ENCODE measurements at regions of chr4 and their contacts with region 1.

Region 1: GRCh38 chr4:142405021-142405694 is 440.9 kb downstream of the INPP4B start:
- DNase-seq: peak; percentile 19 to 66 (median 60)
- ATAC-seq: peak; percentile 72
- H3K4me3 ChIP-seq: peak overlapping the region; percentile 95
- H3K4me3 Mint-ChIP-seq: peak overlapping the region; percentile 92 to 100 (median 99)
- H3K27ac ChIP-seq: peak overlapping the region; percentile 82
- H3K27ac Mint-ChIP-seq: peak overlapping the region; percentile 86 to 100 (median 96)
- H3K4me1 ChIP-seq: peaks cover 26 to 48% of the 10 kb centered on the region in 2 donors
- H3K4me1 Mint-ChIP-seq: peaks cover 22 to 80% (median 69%) of the 10 kb centered on the region in 7 donors
- H3K27me3 ChIP-seq: no peaks in the 10 kb centered on the region
- H3K27me3 Mint-ChIP-seq: no peaks in the 10 kb centered on the region

Region 2: DNA sequence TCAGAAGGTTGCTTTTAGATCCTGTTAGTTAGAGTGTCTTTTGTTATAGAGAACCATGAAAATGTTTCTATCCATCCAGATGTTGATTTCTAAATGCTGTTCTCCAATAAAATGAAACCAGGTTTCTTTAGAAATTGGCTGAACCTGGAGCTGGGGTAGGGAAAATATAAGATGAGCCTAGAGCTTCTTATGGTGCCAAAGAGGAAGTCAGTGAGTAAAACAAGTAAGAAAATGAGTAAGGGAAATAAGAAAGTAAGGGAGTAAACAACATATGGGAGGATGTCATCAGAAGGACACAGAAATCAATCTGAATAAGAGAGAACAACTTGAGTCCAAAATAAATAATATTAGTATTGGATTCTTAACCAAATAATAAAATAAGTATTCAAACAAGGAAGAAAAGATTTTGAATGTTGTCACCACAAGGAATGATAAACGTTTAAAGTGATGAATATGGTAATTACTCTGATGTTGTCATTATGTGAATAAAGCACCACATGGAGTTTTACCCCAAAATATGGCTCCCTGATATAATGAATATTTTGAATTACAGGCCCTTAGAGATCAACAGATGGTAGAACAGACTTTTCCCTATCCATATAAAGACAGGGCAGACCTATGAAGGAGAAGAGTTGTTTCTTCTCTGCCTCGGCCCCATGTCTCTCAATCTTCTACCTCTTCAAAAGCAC is 262.6 kb before region 1 on chr4:
- CTCF ChIA-PET with region 1: no interaction called
- POLR2A ChIA-PET with region 1: no interaction called
- intact Hi-C with region 1: no loop called
- DNase-seq: no peak
- ATAC-seq: no peak
- H3K4me3 ChIP-seq: no peak overlapping the region
- H3K4me3 Mint-ChIP-seq: peak overlapping the region in 3 of 10 donors; percentile 0 to 39 (median 8)
- H3K27ac ChIP-seq: no peak overlapping the region
- H3K27ac Mint-ChIP-seq: peak overlapping the region; percentile 28 to 85 (median 63)
- H3K4me1 ChIP-seq: no peaks in the 10 kb centered on the region
- H3K4me1 Mint-ChIP-seq: peaks cover 11 to 53% (median 43%) of the 10 kb centered on the region in 7 donors
- H3K27me3 ChIP-seq: no peaks in the 10 kb centered on the region
- H3K27me3 Mint-ChIP-seq: no peaks in the 10 kb centered on the region

Region 3: GRCh38 chr4:142353149-142353738 is 51.9 kb before region 1 on chr4:
- CTCF ChIA-PET with region 1: interaction called, 29 read pairs
- POLR2A ChIA-PET with region 1: interaction called, 89 read pairs
- intact Hi-C with region 1: loop called (anchors 1 kb)
- DNase-seq: peak in 6 of 9 donors; percentile 21 to 50 (median 46)
- ATAC-seq: peak; percentile 61
- H3K4me3 ChIP-seq: no peak overlapping the region
- H3K4me3 Mint-ChIP-seq: peak overlapping the region in 9 of 10 donors; percentile 38 to 79 (median 70)
- H3K27ac ChIP-seq: peak overlapping the region; percentile 67
- H3K27ac Mint-ChIP-seq: peak overlapping the region; percentile 68 to 95 (median 92)
- H3K4me1 ChIP-seq: peaks cover 69 to 84% of the 10 kb centered on the region in 2 donors
- H3K4me1 Mint-ChIP-seq: peaks cover 58 to 100% (median 97%) of the 10 kb centered on the region in 7 donors
- H3K27me3 ChIP-seq: no peaks in the 10 kb centered on the region
- H3K27me3 Mint-ChIP-seq: no peaks in the 10 kb centered on the region

Region 4: GRCh38 chr4:142372530-142373260 is 32.5 kb before region 1 on chr4:
- CTCF ChIA-PET with region 1: interaction called, 3 read pairs
- POLR2A ChIA-PET with region 1: interaction called, 27 read pairs
- intact Hi-C with region 1: loop called (anchors 1 to 2 kb)
- DNase-seq: no peak
- ATAC-seq: peak; percentile 22
- H3K4me3 ChIP-seq: no peak overlapping the region
- H3K4me3 Mint-ChIP-seq: peak overlapping the region in 7 of 10 donors; percentile 14 to 48 (median 34)
- H3K27ac ChIP-seq: no peak overlapping the region
- H3K27ac Mint-ChIP-seq: peak overlapping the region; percentile 5 to 87 (median 38)
- H3K4me1 ChIP-seq: peaks cover 53 to 64% of the 10 kb centered on the region in 2 donors
- H3K4me1 Mint-ChIP-seq: peaks cover 46 to 96% (median 91%) of the 10 kb centered on the region in 7 donors
- H3K27me3 ChIP-seq: no peaks in the 10 kb centered on the region
- H3K27me3 Mint-ChIP-seq: no peaks in the 10 kb centered on the region

Region 5: GRCh38 chr4:142435599-142436235 is 30.6 kb after region 1 on chr4:
- CTCF ChIA-PET with region 1: interaction called, 3 read pairs
- POLR2A ChIA-PET with region 1: interaction called, 7 read pairs
- intact Hi-C with region 1: loop called in 1 of 2 experiments (anchors 2 kb)
- DNase-seq: no peak
- ATAC-seq: no peak
- H3K4me3 ChIP-seq: no peak overlapping the region
- H3K4me3 Mint-ChIP-seq: no peak overlapping the region
- H3K27ac ChIP-seq: no peak overlapping the region
- H3K27ac Mint-ChIP-seq: peak overlapping the region in 2 of 9 donors; percentile 21 to 49
- H3K4me1 ChIP-seq: peaks cover 4 to 8% of the 10 kb centered on the region in 2 donors
- H3K4me1 Mint-ChIP-seq: peaks cover 8 to 43% (median 31%) of the 10 kb centered on the region in 7 donors
- H3K27me3 ChIP-seq: no peaks in the 10 kb centered on the region
- H3K27me3 Mint-ChIP-seq: no peaks in the 10 kb centered on the region

Region 6: GRCh38 chr4:142703694-142704309 is 298.6 kb after region 1 on chr4:
- CTCF ChIA-PET with region 1: interaction called, 3 read pairs
- POLR2A ChIA-PET with region 1: interaction called, 5 read pairs
- intact Hi-C with region 1: loop called in 1 of 2 experiments (anchors 2 kb)
- DNase-seq: peak in 7 of 9 donors; percentile 51 to 71 (median 58)
- ATAC-seq: peak; percentile 76
- H3K4me3 ChIP-seq: peak overlapping the region; percentile 14
- H3K4me3 Mint-ChIP-seq: no peak overlapping the region
- H3K27ac ChIP-seq: peak overlapping the region; percentile 54
- H3K27ac Mint-ChIP-seq: no peak overlapping the region
- H3K4me1 ChIP-seq: peaks cover 51 to 94% of the 10 kb centered on the region in 2 donors
- H3K4me1 Mint-ChIP-seq: peaks cover 20 to 35% (median 32%) of the 10 kb centered on the region in 7 donors
- H3K27me3 ChIP-seq: no peaks in the 10 kb centered on the region
- H3K27me3 Mint-ChIP-seq: no peaks in the 10 kb centered on the region

Region 7: GRCh38 chr4:143133977-143134376 is 728.8 kb after region 1 on chr4:
- CTCF ChIA-PET with region 1: no interaction called
- POLR2A ChIA-PET with region 1: no interaction called
- intact Hi-C with region 1: no loop called
- DNase-seq: no peak
- ATAC-seq: no peak
- H3K4me3 ChIP-seq: no peak overlapping the region
- H3K4me3 Mint-ChIP-seq: no peak overlapping the region
- H3K27ac ChIP-seq: no peak overlapping the region
- H3K27ac Mint-ChIP-seq: no peak overlapping the region
- H3K4me1 ChIP-seq: no peaks in the 10 kb centered on the region
- H3K4me1 Mint-ChIP-seq: no peaks in the 10 kb centered on the region
- H3K27me3 ChIP-seq: no peaks in the 10 kb centered on the region
- H3K27me3 Mint-ChIP-seq: peaks cover 0 to 11% (median 0%) of the 10 kb centered on the region in 5 donors

Region 8: GRCh38 chr4:143184217-143185116 is 779.3 kb after region 1 on chr4 and contains the start of gene USP38:
- CTCF ChIA-PET with region 1: no interaction called
- POLR2A ChIA-PET with region 1: no interaction called
- intact Hi-C with region 1: loop called (anchors 5 kb)
- DNase-seq: peak; percentile 74 to 90 (median 85)
- ATAC-seq: peak; percentile 91
- H3K4me3 ChIP-seq: peak within 1 kb of the TSS; percentile 78
- H3K4me3 Mint-ChIP-seq: peak within 1 kb of the TSS; percentile 78 to 99 (median 94)
- H3K27ac ChIP-seq: peak within 1 kb of the TSS; percentile 96
- H3K27ac Mint-ChIP-seq: peak within 1 kb of the TSS; percentile 93 to 99 (median 97)
- H3K4me1 ChIP-seq: peaks cover 27% of the 10 kb centered on the region in 2 donors
- H3K4me1 Mint-ChIP-seq: peaks cover 41 to 82% (median 70%) of the 10 kb centered on the region in 7 donors
- H3K27me3 ChIP-seq: no peaks in the 10 kb centered on the region
- H3K27me3 Mint-ChIP-seq: no peaks in the 10 kb centered on the region
- total RNA-seq, gene USP38: 22.4 to 28.8 (median 24.3) TPM

Measured in naive thymus-derived CD4-positive, alpha-beta T cell (primary cell).